Activated CD4-positive, alpha-beta T cell treated with anti-CD3 and anti-CD28 coated beads for 36 hours (primary cell): ENCODE measurements at regions of chr2 and their contacts with region 1.

Region 1: DNA sequence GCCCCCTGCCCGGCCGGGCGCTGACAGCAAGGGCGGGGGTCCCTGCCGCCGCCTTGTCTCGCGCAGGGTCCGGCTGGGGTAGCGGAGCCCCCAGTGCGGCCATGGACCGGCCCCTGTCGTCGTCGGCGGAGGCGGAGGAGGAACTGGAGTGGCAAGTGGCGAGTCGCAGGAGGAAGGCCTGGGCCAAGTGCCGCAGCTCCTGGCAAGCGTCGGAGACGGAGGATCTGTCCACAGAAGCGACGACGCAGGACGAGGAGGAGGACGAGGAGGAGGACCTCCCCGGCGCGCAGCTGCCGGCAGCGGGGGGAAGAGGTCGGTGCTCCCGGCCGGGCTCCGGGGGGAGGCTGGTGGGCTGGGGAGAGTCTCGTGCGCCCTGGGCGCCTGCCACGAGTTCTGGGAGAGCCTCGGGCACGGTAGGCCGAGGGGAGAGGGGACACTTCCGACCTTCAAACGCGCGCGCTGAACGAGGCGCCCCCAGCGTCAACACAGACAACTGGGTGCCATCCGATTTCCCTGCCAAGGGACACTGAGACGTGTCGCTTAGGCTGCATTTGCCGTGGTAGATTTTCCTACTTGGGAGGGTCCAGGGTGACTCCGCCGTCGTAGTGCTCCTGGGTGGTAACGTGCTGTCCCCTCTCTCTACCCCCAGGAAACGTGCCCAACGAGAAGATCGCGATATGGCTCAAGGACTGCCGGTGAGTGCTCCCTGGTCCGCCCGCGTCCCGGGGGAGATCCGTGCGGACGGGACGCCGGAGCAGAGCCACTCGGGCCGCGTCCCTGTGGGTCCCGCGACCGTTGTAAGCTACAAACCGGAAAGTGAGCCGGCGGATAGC is 652 bp downstream of the ITPRID2 start:
- DNase-seq: peak; percentile 78
- ATAC-seq: peak; percentile 70
- H3K4me3 Mint-ChIP-seq: peak overlapping the region; percentile 87
- H3K27ac Mint-ChIP-seq: peak overlapping the region; percentile 79
- H3K4me1 Mint-ChIP-seq: peaks cover 35% of the 10 kb centered on the region
- H3K27me3 Mint-ChIP-seq: peaks cover 6% of the 10 kb centered on the region

Region 2: GRCh38 chr2:181077128-181077709 is 815.0 kb before region 1 on chr2:
- CTCF ChIA-PET with region 1: no interaction called
- POLR2A ChIA-PET with region 1: no interaction called
- intact Hi-C with region 1: loop called in 1 of 2 experiments (anchors 10 kb)
- DNase-seq: no peak
- ATAC-seq: peak; percentile 90
- H3K4me3 Mint-ChIP-seq: no peak overlapping the region
- H3K27ac Mint-ChIP-seq: no peak overlapping the region
- H3K4me1 Mint-ChIP-seq: peaks cover 5% of the 10 kb centered on the region
- H3K27me3 Mint-ChIP-seq: no peaks in the 10 kb centered on the region

Region 3: GRCh38 chr2:181183878-181184542 is 708.2 kb before region 1 on chr2:
- CTCF ChIA-PET with region 1: no interaction called
- POLR2A ChIA-PET with region 1: no interaction called
- intact Hi-C with region 1: no loop called
- DNase-seq: no peak
- ATAC-seq: no peak
- H3K4me3 Mint-ChIP-seq: no peak overlapping the region
- H3K27ac Mint-ChIP-seq: no peak overlapping the region
- H3K4me1 Mint-ChIP-seq: peaks cover 18% of the 10 kb centered on the region
- H3K27me3 Mint-ChIP-seq: no peaks in the 10 kb centered on the region

Region 4: DNA sequence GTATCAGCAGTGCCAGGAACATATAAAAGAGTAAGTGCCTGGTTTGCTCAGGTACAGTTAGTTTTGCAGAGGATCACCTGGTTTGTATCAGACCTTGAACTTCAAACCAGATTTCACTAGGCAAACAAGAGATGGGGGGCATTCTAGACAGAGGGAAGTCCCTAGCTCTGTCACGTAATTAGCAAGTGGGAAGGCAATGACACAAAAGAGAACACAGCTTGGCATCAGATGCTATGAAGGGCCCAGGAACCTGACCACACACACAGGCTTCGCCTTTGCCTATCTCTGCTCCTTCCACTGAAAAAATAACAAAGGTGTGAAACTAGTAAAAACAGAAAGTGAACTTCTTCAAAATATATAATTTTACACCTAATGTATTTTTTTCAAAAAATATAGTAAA is 297.9 kb before region 1 on chr2:
- CTCF ChIA-PET with region 1: no interaction called
- POLR2A ChIA-PET with region 1: no interaction called
- intact Hi-C with region 1: no loop called
- DNase-seq: no peak
- ATAC-seq: no peak
- H3K4me3 Mint-ChIP-seq: no peak overlapping the region
- H3K27ac Mint-ChIP-seq: no peak overlapping the region
- H3K4me1 Mint-ChIP-seq: no peaks in the 10 kb centered on the region
- H3K27me3 Mint-ChIP-seq: no peaks in the 10 kb centered on the region

Region 5: DNA sequence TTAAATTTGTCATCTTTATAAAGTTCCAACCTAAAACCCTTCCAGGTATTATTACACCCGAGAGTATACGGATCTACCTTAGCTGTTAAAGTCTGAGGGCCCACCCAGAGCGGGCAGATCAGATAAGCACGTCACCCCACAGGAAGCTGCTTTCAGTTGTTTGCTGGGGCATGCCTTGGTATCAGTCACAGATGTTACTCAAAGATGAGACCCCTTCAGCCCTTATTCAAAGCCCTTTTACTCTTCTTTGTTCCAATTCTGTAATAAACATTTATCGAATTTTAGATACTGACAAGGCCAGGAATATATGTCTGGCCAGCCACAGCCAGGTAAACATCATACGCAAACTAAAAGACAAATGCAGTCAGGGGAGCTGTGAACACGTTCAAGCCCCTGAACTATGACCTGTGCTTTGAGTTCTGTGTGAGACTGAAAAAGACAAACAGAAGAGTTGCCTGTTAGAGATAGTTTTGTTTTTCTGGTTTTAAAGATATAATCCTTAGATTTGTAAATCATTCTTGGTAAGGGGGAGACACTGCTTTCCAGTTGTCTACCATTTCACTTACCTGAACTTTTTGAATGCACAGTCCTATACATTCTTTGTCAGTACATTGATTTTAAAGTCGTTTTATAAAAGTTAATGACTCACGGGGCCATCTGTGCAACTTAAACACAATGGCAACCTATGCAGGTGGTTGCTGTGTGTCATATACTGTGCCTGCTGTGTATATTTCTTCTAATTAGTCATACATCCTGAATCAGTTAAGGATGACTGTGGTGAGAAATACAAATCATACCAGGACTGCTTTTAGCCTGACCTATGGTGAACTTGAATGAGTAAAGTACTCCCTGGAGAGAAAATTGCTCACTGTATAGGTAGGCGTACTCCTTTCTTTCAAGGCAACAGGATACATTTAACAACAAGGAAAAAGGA is 101.2 kb before region 1 on chr2:
- CTCF ChIA-PET with region 1: no interaction called
- POLR2A ChIA-PET with region 1: no interaction called
- intact Hi-C with region 1: loop called (anchors 1 to 5 kb)
- DNase-seq: peak; percentile 60
- ATAC-seq: peak; percentile 97
- H3K4me3 Mint-ChIP-seq: no peak overlapping the region
- H3K27ac Mint-ChIP-seq: peak overlapping the region; percentile 34
- H3K4me1 Mint-ChIP-seq: peaks cover 23% of the 10 kb centered on the region
- H3K27me3 Mint-ChIP-seq: peaks cover 6% of the 10 kb centered on the region

Region 6: GRCh38 chr2:181828122-181828705 is 64.0 kb before region 1 on chr2:
- CTCF ChIA-PET with region 1: no interaction called
- POLR2A ChIA-PET with region 1: no interaction called
- intact Hi-C with region 1: no loop called
- DNase-seq: no peak
- ATAC-seq: no peak
- H3K4me3 Mint-ChIP-seq: no peak overlapping the region
- H3K27ac Mint-ChIP-seq: no peak overlapping the region
- H3K4me1 Mint-ChIP-seq: no peaks in the 10 kb centered on the region
- H3K27me3 Mint-ChIP-seq: peaks cover 10% of the 10 kb centered on the region

Region 7: GRCh38 chr2:182715896-182716668 is 823.9 kb after region 1 on chr2 and contains the start of gene DNAJC10:
- CTCF ChIA-PET with region 1: no interaction called
- POLR2A ChIA-PET with region 1: no interaction called
- intact Hi-C with region 1: loop called in 1 of 2 experiments (anchors 5 kb)
- DNase-seq: peak; percentile 91
- ATAC-seq: peak; percentile 92
- H3K4me3 Mint-ChIP-seq: no peak within 1 kb of the TSS
- H3K27ac Mint-ChIP-seq: no peak within 1 kb of the TSS
- H3K4me1 Mint-ChIP-seq: peaks cover 3% of the 10 kb centered on the region
- H3K27me3 Mint-ChIP-seq: peaks cover under 1% of the 10 kb centered on the region
- total RNA-seq, gene DNAJC10: 41.7 to 48.9 TPM

Region 8: DNA sequence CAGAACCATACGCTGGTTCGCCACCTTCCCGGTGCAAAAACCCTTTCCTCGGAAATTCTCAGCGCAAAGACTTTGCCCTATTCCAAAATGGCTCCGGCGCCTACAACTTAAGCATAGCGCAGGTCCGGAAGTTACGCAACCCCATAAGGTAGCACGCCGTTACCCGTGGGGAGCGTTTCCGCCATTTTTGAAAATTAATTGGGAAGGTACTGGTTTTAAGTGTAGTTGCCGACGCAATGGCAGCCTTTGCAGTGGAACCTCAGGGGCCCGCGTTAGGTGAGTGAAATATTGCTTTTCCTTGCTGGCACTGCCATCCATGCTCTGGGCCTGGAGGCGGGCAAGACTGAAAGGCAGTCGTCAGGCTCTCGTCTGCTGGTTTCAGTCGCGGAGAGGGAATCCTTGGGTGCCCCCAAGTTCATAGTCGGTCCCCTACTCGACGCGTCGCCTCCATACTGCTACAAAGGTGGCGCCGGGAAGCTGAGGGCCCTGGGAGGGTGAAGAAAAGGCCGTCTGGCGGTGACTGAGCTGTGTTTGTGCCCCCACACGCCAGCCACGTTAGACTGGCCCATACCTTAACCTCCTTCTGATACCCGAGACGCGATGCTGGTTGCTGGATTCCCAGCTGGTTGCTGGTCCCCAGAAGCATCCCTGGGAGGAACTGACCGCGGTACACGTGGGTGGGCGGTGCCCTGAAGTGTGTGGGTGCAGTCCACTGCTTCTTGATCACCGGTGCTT is 1232.2 kb after region 1 on chr2 and contains the start of gene NUP35:
- CTCF ChIA-PET with region 1: no interaction called
- POLR2A ChIA-PET with region 1: no interaction called
- intact Hi-C with region 1: loop called in 1 of 2 experiments (anchors 10 kb)
- DNase-seq: peak; percentile 89
- ATAC-seq: peak; percentile 94
- H3K4me3 Mint-ChIP-seq: peak within 1 kb of the TSS; percentile 96
- H3K27ac Mint-ChIP-seq: peak within 1 kb of the TSS; percentile 97
- H3K4me1 Mint-ChIP-seq: peaks cover 25% of the 10 kb centered on the region
- H3K27me3 Mint-ChIP-seq: peaks cover 7% of the 10 kb centered on the region
- total RNA-seq, gene NUP35: 36.0 to 50.5 TPM